ENCODE measurements at regions of chr1 and their contacts with region 1.

Region 1: GRCh38 chr1:24779689-24780464 is 34.6 kb downstream of the CLIC4 start:
- DNase-seq: no peak
- ATAC-seq: no peak
- H3K4me3 Mint-ChIP-seq: no peak overlapping the region
- H3K27ac Mint-ChIP-seq: no peak overlapping the region
- H3K4me1 Mint-ChIP-seq: peaks cover 67% of the 10 kb centered on the region
- H3K27me3 Mint-ChIP-seq: no peaks in the 10 kb centered on the region
- CTCF ChIP-seq: no peak

Region 2: GRCh38 chr1:24502709-24503058 is 277.2 kb before region 1 on chr1 and contains the start of gene RCAN3:
- CTCF ChIA-PET with region 1: no interaction called
- POLR2A ChIA-PET with region 1: no interaction called
- intact Hi-C with region 1: no loop called
- DNase-seq: peak; percentile 89
- ATAC-seq: peak; percentile 86
- H3K4me3 Mint-ChIP-seq: peak within 1 kb of the TSS; percentile 91
- H3K27ac Mint-ChIP-seq: peak within 1 kb of the TSS; percentile 97
- H3K4me1 Mint-ChIP-seq: peaks cover 52% of the 10 kb centered on the region
- H3K27me3 Mint-ChIP-seq: no peaks in the 10 kb centered on the region
- CTCF ChIP-seq: no peak
- total RNA-seq, gene RCAN3: 22.8 and 23.6 TPM in 2 replicates

Region 3: GRCh38 chr1:24536391-24536840 is 243.5 kb before region 1 on chr1:
- CTCF ChIA-PET with region 1: no interaction called
- POLR2A ChIA-PET with region 1: no interaction called
- intact Hi-C with region 1: no loop called
- DNase-seq: peak; percentile 51
- ATAC-seq: peak; percentile 73
- H3K4me3 Mint-ChIP-seq: peak overlapping the region; percentile 81
- H3K27ac Mint-ChIP-seq: peak overlapping the region; percentile 99
- H3K4me1 Mint-ChIP-seq: peaks cover 74% of the 10 kb centered on the region
- H3K27me3 Mint-ChIP-seq: no peaks in the 10 kb centered on the region
- CTCF ChIP-seq: no peak

Region 4: GRCh38 chr1:24724345-24725208 is 55.3 kb before region 1 on chr1:
- CTCF ChIA-PET with region 1: no interaction called
- POLR2A ChIA-PET with region 1: interaction called, 11 read pairs
- intact Hi-C with region 1: no loop called
- DNase-seq: no peak
- ATAC-seq: no peak
- H3K4me3 Mint-ChIP-seq: no peak overlapping the region
- H3K27ac Mint-ChIP-seq: no peak overlapping the region
- H3K4me1 Mint-ChIP-seq: peaks cover 15% of the 10 kb centered on the region
- H3K27me3 Mint-ChIP-seq: no peaks in the 10 kb centered on the region
- CTCF ChIP-seq: no peak

Region 5: DNA sequence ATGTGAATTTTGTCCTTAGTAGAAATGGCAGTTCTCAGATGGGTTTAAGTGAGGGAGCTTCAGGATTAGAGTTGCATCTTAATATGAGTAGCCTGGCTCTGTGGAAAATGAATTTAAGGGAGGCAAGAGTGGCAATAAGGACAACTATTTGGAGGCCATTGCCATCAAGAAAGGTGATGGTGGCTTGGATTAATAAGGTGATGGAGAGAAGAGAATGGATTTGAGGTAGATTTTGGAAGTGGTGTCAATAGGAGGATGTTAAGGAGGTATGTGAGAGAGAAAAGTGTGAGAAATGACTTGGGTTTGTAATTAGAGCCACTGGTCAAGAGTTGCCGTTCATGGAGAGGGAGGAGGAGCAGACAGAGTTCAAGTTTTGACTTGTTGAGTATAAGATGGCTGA is 18.3 kb before region 1 on chr1:
- CTCF ChIA-PET with region 1: no interaction called
- POLR2A ChIA-PET with region 1: no interaction called
- intact Hi-C with region 1: loop called (anchors 2 kb)
- DNase-seq: no peak
- ATAC-seq: no peak
- H3K4me3 Mint-ChIP-seq: no peak overlapping the region
- H3K27ac Mint-ChIP-seq: no peak overlapping the region
- H3K4me1 Mint-ChIP-seq: peaks cover 35% of the 10 kb centered on the region
- H3K27me3 Mint-ChIP-seq: no peaks in the 10 kb centered on the region
- CTCF ChIP-seq: no peak